ENCODE measurements at regions of chr1 and their contacts with region 1.

Region 1: DNA sequence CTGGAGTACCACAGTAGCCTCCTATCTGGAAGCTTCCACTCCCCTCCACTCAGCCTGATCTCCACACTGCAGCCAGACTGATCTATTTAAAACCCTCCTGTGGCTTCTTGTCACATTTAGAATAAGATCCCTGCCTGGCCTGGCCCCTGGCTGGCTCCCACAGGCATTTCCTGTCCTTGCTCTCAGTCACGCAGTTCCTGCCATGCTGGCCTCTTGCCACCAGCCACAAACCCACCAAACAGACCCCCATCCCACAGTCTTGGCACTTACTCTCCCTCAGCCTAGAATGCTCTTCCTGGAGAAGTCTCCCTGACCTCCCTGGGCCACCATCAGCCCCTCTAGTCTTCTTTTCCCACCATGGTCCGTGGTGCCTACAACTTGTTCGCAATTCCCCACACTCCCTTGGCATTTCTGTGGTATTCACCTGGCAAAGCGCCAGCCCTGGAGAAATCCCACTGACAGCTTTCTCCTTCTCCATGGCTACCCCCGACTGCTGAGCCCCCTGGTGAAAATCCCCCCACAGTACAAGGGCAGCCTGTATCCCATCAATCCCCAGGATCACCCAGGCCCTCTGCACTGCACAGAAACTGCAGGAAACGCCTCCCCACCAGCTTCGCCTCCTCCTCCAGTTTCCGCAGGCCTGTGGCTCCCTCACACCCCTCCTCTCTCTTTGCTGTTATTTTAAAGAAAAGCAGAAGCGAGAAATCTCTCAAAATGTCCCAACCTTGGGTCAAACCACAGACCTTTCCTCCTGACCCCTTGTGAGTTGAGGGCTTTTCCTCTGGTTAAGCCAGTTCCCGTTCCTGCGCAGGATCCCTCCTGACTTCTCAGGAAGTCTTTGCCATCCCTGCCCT is 94.5 kb downstream of the SYT2 start:
- DNase-seq: peak; percentile 46
- H3K4me3 ChIP-seq: no peak overlapping the region
- H3K27ac ChIP-seq: peak overlapping the region; percentile 55
- H3K4me1 ChIP-seq: peaks cover 17% of the 10 kb centered on the region
- H3K27me3 ChIP-seq: no peaks in the 10 kb centered on the region
- CTCF ChIP-seq: no peak
- POLR2A ChIP-seq: no peak

Region 2: DNA sequence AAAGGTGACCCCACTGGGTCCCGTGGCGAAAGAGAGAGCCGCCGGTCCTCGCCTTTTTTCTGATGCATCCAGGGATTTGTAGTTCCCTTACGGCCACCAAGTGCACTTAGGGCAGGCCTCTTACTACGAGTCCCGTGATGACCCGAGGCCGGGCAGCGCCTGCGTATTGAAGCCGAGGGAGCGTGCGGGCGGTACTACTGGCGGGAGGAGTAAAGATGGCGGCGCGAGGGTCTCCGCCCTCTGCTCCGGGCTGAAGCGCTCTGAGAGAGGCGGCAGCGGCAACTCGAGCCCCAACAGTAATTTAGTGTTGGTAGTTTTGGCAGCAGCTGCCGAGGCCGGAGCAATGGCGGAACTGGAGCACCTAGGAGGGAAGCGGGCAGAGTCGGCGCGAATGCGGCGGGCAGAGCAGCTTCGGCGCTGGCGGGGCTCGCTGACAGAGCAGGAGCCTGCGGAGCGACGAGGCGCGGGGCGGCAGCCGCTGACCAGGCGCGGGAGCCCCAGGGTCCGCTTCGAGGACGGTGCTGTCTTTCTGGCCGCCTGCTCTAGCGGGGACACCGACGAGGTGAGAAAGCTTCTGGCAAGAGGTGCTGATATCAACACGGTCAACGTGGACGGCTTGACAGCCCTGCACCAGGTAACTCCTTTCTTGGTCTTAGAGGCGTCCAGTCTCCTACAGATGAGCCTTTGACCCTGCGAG is 267.1 kb before region 1 on chr1 and contains the start of gene PPP1R12B:
- CTCF ChIA-PET with region 1: no interaction called
- POLR2A ChIA-PET with region 1: no interaction called
- dilution Hi-C with region 1: no loop called
- intact Hi-C with region 1: loop called (anchors 2 kb)
- DNase-seq: peak; percentile 99
- H3K4me3 ChIP-seq: peak within 1 kb of the TSS; percentile 44 to 75 (median 55)
- H3K27ac ChIP-seq: peak within 1 kb of the TSS; percentile 52
- H3K4me1 ChIP-seq: peaks cover 7% of the 10 kb centered on the region
- H3K27me3 ChIP-seq: no peaks in the 10 kb centered on the region
- CTCF ChIP-seq: no peak
- POLR2A ChIP-seq: peak; percentile 71
- total RNA-seq, gene PPP1R12B: 11.5 and 11.6 TPM in 2 replicates

Region 3: DNA sequence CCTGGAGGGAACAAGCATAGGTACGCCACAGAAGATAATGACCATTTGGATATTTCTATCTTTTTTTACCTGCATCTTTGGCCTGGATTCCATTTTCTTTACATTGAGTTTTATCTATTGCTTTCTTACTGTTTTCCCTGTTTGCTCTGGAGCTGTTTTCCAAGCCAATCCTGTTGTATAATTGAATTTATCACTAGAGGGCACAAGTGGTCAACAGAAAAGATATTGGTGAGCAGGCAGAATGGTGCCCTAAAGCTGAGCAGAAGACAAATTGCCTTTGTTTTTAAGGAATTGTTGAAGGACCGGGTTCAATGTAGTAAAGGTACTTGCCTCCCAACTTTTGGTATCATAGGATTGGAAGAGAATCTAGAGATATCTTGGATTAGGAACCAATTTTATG is 114.4 kb before region 1 on chr1:
- CTCF ChIA-PET with region 1: interaction called, 17 read pairs
- POLR2A ChIA-PET with region 1: no interaction called
- dilution Hi-C with region 1: no loop called
- intact Hi-C with region 1: no loop called
- DNase-seq: peak; percentile 32
- H3K4me3 ChIP-seq: no peak overlapping the region
- H3K27ac ChIP-seq: no peak overlapping the region
- H3K4me1 ChIP-seq: no peaks in the 10 kb centered on the region
- H3K27me3 ChIP-seq: no peaks in the 10 kb centered on the region
- CTCF ChIP-seq: peak in 1 of 2 donors; percentile 12
- POLR2A ChIP-seq: no peak

Region 4: GRCh38 chr1:202589190-202590030 is 26.3 kb before region 1 on chr1:
- CTCF ChIA-PET with region 1: no interaction called
- POLR2A ChIA-PET with region 1: no interaction called
- dilution Hi-C with region 1: no loop called
- intact Hi-C with region 1: loop called (anchors 1 kb)
- DNase-seq: peak; percentile 91
- H3K4me3 ChIP-seq: no peak overlapping the region
- H3K27ac ChIP-seq: peak overlapping the region; percentile 92
- H3K4me1 ChIP-seq: peaks cover 51% of the 10 kb centered on the region
- H3K27me3 ChIP-seq: no peaks in the 10 kb centered on the region
- CTCF ChIP-seq: no peak
- POLR2A ChIP-seq: peak; percentile 22

Measured in endothelial cell of umbilical vein (primary cell).